Dorsolateral prefrontal cortex (tissue), 120 donors: ENCODE measurements at regions of chr7 and their contacts with region 1.

Region 1: DNA sequence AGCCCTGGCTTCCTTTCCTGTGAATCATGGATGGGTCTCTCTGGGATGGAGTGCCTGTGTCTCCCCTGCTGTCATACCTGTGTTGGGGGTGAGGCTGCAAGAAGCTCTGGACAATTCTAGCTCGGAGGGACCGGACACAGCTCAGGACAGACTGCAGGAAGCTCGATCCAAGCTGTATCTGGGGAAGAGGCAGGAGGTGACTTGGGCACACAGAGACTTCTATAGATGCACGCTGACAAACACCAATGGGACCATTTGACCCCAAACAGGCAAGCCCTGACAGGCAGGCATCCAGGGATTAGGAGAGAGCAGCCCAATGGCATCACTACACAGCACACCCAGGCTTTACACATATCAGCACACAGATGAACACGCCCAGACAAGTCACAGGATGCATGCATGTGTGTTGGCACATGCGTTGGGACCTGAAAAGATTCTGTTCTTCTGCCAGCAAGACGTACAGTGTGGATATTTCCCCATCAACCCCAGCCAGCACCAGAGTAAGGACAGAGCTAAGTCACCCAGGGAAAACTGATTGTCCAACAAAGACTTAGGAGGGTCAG is 4.5 kb downstream of the LLCFC1 start:
- DNase-seq: no peak
- H3K4me3 ChIP-seq: no peak overlapping the region
- H3K27ac ChIP-seq: no peak overlapping the region
- H3K27me3 ChIP-seq: peaks cover 0 to 3% (median 0%) of the 10 kb centered on the region in 45 donors
- CTCF ChIP-seq: no peak

Region 2: GRCh38 chr7:142771353-142771723 is 172.4 kb before region 1 on chr7:
- intact Hi-C with region 1: no loop called
- DNase-seq: no peak
- H3K4me3 ChIP-seq: no peak overlapping the region
- H3K27ac ChIP-seq: no peak overlapping the region
- H3K27me3 ChIP-seq: peaks cover 0 to 9% (median 0%) of the 10 kb centered on the region in 45 donors
- CTCF ChIP-seq: no peak

Region 3: DNA sequence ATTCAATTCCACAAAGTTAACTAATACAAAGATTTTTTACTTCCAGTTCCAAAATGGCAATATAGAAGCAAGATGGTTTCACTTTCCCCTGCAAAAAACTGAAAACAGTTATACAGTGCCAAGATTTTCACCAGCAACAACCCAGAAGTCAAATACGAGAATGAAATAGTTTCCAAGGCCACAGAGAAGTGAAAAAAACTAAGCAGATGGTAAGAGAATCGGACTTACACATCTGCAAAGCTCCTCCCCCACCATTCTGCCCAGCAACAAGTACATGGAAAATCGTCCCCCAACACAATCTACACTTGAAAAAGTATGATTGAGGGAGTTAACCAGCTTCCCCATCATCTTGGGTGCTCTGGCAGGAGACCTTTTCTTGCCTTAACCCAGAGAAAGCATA is 48.7 kb after region 1 on chr7:
- intact Hi-C with region 1: loop called in 1 of 2 experiments (anchors 10 kb)
- DNase-seq: no peak
- H3K4me3 ChIP-seq: no peak overlapping the region
- H3K27ac ChIP-seq: no peak overlapping the region
- H3K27me3 ChIP-seq: no peaks in the 10 kb centered on the region
- CTCF ChIP-seq: no peak